GM10248 (cell line): ENCODE measurements at regions of chr9 and their contacts with region 1.

Region 1: GRCh38 chr9:89597711-89598625 is 6.8 kb upstream of the GADD45G start:
- DNase-seq: peak; percentile 57
- CTCF ChIP-seq: peak; percentile 68

Region 2: GRCh38 chr9:89576404-89576839 is 21.5 kb before region 1 on chr9:
- CTCF ChIA-PET with region 1: interaction called, 23 read pairs
- POLR2A ChIA-PET with region 1: no interaction called
- DNase-seq: no peak
- CTCF ChIP-seq: peak; percentile 43

Region 3: DNA sequence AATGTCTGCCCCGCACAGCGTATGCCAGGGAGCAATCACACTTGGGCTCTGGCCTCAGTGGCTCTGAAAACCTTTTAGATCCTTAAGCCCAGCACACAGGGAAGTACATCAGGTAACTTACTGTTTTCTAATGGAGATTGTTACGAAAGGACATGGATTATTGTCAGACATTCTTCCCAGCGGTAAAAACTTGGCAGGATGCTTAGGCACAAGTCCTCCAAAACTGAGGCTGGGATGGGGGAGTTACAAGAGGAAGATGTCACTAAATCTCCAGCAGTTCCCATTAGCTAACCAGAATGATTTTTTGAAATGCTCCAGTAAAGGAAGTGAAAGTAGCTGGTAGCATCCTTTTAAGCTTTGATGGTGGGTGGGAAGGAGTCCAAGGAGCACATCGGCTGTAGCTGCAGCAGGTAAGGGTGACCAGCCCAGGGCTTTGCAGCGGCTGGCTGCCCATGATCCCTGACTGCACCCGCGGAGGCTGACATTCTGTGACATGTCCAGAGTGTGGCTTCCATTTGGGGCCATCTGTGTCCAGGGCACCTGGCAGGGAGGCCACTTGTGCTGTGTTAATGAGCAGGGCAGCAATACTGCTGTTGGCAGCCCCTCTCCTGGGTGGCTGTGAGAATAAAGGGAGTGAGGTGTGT is 172.7 kb after region 1 on chr9:
- CTCF ChIA-PET with region 1: no interaction called
- POLR2A ChIA-PET with region 1: no interaction called
- DNase-seq: no peak
- CTCF ChIP-seq: no peak

Region 4: DNA sequence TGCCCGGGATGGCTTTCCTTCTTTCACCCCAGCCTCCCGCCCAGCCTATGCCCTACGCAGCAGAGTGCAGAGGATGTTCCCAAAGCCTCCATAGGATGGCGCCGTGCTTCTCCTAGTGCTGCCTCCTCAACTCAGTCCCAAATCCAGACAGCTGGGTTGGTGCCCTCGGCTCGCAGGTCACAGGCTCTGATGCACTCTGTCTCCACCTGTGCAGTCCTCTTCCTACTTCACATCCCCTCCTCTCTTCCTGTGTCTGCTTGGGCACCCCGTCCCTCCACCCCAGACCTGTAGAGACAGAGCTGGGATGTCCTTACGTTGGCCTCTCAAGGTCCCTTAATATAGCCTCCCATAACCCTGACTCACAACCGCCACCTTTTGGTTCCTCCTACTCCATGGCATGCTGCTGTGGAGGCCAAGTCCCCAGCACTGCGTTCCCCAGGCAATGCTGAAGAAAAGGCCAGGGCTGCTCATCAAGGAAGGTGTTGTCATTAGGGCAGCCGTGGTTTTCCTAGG is 321.3 kb after region 1 on chr9:
- CTCF ChIA-PET with region 1: interaction called, 23 read pairs
- POLR2A ChIA-PET with region 1: no interaction called
- DNase-seq: peak; percentile 72
- CTCF ChIP-seq: peak; percentile 39

Region 5: GRCh38 chr9:90102292-90102901 is 504.4 kb after region 1 on chr9:
- CTCF ChIA-PET with region 1: interaction called, 298 read pairs
- POLR2A ChIA-PET with region 1: no interaction called
- DNase-seq: peak; percentile 85
- CTCF ChIP-seq: peak; percentile 70